Activated CD4-positive, alpha-beta T cell treated with anti-CD3 and anti-CD28 coated beads for 36 hours (primary cell): ENCODE measurements at regions of chr5 and their contacts with region 1.

Region 1: DNA sequence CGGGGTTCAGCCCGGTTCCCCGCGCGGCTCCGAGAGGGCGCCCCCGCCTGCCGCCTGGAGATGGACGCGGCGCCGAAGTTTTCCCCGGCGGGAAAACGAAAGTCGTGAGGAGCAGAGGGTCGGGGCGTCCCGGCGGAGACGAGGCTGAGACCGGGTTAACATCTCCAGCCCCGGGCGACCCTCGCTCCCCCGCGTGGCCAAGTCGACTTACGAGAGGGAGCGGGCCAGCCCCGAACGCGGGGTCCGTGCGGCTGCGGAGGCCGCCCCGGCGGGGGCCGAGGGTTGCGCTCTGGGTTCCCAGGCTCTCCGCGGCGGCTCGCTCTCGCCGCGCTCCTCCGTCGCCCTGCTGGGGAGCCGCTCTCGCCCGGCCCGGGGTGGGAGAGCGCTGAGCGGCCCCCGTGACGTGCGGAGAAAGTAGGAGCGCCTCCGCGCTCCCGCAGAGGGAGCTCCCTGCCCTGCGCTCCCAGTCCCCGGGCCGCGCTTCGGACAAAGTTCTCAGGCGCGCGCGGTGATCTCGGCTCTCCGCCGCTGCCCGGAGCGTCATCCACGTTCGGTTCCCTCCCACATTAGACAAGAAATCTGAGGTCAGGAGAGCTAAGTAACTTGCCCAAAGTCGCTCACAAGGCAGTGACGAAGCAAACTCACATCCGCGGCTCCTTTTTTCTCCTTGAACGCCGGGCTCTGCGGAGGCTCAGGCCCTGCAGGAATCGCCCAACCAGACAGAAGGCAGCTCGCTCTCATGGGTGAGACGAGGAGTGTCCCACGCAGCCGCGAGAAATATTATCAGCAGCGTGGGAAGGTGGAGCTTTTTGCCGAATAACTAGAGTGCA is 1.2 kb upstream of the GCNT4 start:
- DNase-seq: peak; percentile 72
- ATAC-seq: peak; percentile 39
- H3K4me3 Mint-ChIP-seq: peak overlapping the region; percentile 79
- H3K27ac Mint-ChIP-seq: peak overlapping the region; percentile 82
- H3K4me1 Mint-ChIP-seq: peaks cover 82% of the 10 kb centered on the region
- H3K27me3 Mint-ChIP-seq: peaks cover 3% of the 10 kb centered on the region

Region 2: DNA sequence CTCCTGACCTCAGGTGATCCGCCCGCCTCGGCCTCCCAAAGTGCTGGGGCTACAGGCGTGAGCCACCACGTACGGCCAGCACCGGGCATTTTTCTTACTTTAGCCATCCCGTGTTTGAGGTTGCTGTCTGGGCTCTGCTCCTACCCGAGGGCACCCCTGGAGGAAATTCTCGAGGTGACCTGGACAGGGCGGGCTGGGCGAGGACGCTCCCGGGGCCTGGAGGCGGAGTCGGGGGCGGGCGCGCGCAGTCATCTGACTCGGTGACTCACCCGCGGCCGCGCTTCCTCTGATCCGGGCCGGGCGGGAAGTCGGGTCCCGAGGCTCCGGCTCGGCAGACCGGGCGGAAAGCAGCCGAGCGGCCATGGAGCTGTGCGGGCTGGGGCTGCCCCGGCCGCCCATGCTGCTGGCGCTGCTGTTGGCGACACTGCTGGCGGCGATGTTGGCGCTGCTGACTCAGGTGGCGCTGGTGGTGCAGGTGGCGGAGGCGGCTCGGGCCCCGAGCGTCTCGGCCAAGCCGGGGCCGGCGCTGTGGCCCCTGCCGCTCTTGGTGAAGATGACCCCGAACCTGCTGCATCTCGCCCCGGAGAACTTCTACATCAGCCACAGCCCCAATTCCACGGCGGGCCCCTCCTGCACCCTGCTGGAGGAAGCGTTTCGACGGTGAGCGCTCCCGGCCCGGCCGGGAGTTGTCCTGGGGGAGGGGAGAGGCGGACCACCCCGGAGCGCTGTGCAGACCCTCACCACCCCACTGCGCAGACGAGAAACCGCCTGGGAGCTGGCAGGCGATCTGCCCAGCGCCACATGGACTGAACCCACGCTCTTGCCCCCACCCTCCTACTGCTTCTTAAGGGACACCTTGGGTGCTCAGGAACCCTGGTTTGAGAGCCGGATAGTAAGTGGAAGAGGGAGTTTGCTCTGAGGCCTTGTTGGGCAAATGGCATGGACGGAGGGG is 368.3 kb before region 1 on chr5 and contains the start of gene HEXB:
- CTCF ChIA-PET with region 1: no interaction called
- POLR2A ChIA-PET with region 1: no interaction called
- intact Hi-C with region 1: loop called in 1 of 2 experiments (anchors 5 kb)
- DNase-seq: peak; percentile 94
- ATAC-seq: peak; percentile 98
- H3K4me3 Mint-ChIP-seq: peak within 1 kb of the TSS; percentile 73
- H3K27ac Mint-ChIP-seq: peak within 1 kb of the TSS; percentile 87
- H3K4me1 Mint-ChIP-seq: peaks cover 21% of the 10 kb centered on the region
- H3K27me3 Mint-ChIP-seq: no peaks in the 10 kb centered on the region
- total RNA-seq, gene HEXB: 42.6 to 47.6 TPM

Region 3: DNA sequence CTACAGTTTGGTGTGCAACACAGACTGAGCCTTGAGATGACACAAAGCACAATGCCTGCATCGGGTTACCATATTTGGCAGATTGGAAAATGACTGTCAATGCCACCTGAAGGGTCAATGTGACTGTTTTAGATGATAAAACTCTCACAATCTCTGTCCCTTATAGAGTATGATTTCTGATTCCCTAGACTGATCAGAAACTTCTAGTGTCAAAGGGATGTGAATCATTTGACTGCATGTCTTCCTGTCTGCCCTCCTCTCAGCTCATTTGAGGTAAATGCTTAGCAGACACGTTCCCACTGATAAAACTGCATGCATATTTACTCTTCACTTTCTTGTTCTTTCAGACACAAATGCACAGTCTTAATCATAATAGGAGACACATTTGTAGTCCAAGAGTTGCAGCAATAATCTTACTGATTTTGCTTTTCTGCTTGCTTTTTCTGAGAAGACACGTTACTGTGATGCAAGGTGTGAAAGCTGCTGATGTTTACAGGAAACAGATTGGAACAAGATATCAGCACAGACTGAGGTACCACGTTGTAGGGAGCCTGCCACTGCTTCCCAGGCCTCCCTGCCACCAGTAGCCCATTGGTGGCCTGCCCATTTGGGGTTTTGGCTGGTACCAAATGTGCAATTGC is 78.9 kb before region 1 on chr5:
- CTCF ChIA-PET with region 1: interaction called, 3 read pairs
- POLR2A ChIA-PET with region 1: no interaction called
- intact Hi-C with region 1: loop called in 1 of 2 experiments (anchors 1 kb)
- DNase-seq: peak; percentile 47
- ATAC-seq: peak; percentile 93
- H3K4me3 Mint-ChIP-seq: no peak overlapping the region
- H3K27ac Mint-ChIP-seq: peak overlapping the region; percentile 61
- H3K4me1 Mint-ChIP-seq: peaks cover 18% of the 10 kb centered on the region
- H3K27me3 Mint-ChIP-seq: no peaks in the 10 kb centered on the region

Region 4: GRCh38 chr5:75265731-75266130 is 212.2 kb after region 1 on chr5:
- CTCF ChIA-PET with region 1: interaction called, 3 read pairs
- POLR2A ChIA-PET with region 1: no interaction called
- intact Hi-C with region 1: loop called in 1 of 2 experiments (anchors 1 kb)
- DNase-seq: no peak
- ATAC-seq: peak; percentile 47
- H3K4me3 Mint-ChIP-seq: no peak overlapping the region
- H3K27ac Mint-ChIP-seq: no peak overlapping the region
- H3K4me1 Mint-ChIP-seq: no peaks in the 10 kb centered on the region
- H3K27me3 Mint-ChIP-seq: no peaks in the 10 kb centered on the region

Region 5: DNA sequence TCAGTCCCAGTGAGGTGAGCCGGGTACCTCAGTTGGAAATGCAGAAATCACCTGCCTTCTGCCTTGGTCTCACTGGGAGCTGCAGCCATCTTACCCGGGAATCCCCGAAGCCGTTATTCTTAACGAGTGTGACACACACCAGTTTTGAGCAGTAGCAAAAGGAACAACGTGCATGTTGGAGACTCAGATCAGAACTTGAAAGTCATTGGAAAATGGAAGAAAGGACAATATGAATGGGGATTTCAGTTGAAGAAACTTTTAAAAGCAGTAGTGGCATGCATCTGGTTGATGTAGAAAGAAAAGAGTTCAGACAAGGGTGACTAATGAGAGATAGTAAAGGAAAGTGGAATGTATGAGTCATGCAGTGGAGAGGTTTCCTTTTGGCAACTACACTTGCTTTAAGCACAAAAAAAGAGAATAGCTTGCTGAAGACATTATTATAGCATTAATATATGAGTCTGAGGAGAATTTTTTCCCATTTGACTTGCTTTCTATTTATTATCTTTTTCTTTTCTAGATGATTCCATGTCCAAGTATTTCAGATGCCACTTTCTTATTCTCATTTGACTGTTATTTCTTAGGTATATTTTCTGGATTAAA is 513.3 kb after region 1 on chr5:
- CTCF ChIA-PET with region 1: no interaction called
- POLR2A ChIA-PET with region 1: no interaction called
- intact Hi-C with region 1: loop called in 1 of 2 experiments (anchors 5 kb)
- DNase-seq: peak; percentile 78
- ATAC-seq: peak; percentile 85
- H3K4me3 Mint-ChIP-seq: peak overlapping the region; percentile 56
- H3K27ac Mint-ChIP-seq: peak overlapping the region; percentile 96
- H3K4me1 Mint-ChIP-seq: peaks cover 63% of the 10 kb centered on the region
- H3K27me3 Mint-ChIP-seq: no peaks in the 10 kb centered on the region

Region 6: GRCh38 chr5:75717082-75717922 is 663.8 kb after region 1 on chr5 and contains the start of gene POC5:
- CTCF ChIA-PET with region 1: interaction called, 3 read pairs
- POLR2A ChIA-PET with region 1: no interaction called
- intact Hi-C with region 1: loop called in 1 of 2 experiments (anchors 5 kb)
- DNase-seq: peak; percentile 99
- ATAC-seq: peak; percentile 94
- H3K4me3 Mint-ChIP-seq: peak within 1 kb of the TSS; percentile 97
- H3K27ac Mint-ChIP-seq: peak within 1 kb of the TSS; percentile 99
- H3K4me1 Mint-ChIP-seq: peaks cover 32% of the 10 kb centered on the region
- H3K27me3 Mint-ChIP-seq: no peaks in the 10 kb centered on the region
- total RNA-seq, gene POC5: 20.2 to 20.3 TPM

Region 7: GRCh38 chr5:75847561-75848021 is 794.1 kb after region 1 on chr5:
- CTCF ChIA-PET with region 1: no interaction called
- POLR2A ChIA-PET with region 1: no interaction called
- intact Hi-C with region 1: no loop called
- DNase-seq: no peak
- ATAC-seq: no peak
- H3K4me3 Mint-ChIP-seq: no peak overlapping the region
- H3K27ac Mint-ChIP-seq: no peak overlapping the region
- H3K4me1 Mint-ChIP-seq: no peaks in the 10 kb centered on the region
- H3K27me3 Mint-ChIP-seq: peaks cover 16% of the 10 kb centered on the region